Left cardiac atrium (tissue), 4 donors: ENCODE measurements at regions of chr12 and their contacts with region 1.

Region 1: DNA sequence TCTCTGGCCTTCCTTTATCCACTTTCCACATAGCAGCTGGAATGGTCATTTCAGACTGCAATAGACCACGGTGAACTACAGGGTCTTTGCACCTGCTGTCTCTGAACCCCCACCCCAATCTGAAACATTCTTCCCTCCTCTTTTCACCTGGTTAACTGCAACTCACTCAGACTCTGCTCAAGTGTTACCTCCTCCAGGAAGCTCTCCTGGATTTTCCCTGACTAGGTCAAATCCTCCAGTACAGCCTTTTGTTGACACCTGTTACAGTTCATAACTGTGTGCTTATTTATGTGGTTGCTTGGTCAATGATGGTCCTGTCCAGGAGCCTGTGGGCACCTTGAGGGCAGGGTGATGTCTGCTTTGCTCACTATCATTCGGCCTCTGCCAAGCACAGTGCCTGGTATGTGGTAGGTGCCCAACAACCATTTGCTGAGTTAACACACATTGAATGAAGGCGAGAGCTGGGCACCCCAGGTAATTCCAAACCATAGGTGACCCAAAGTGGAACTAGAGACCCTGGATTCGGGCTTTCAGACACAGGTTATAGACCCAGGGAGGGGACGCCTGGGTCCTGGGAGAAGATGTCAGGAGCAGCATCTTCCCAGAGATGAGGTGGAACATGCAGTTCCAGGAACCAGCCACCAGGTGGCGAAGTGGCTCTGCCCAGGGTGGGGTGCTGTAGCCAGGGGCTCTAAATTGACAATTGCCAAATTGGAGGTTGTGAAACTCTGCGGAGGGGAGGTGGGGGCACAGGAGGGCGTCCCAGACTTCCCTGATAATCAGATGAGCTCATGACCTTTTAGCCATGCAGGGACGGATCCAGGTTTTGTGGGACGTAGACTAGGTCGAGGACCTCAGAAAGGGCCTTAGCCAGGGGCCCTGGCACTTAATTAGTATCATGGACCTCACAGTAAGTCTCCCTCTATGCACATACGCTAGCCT is 28.1 kb downstream of the TRPV4 start:
- DNase-seq: peak; percentile 60
- ATAC-seq: peak; percentile 85 to 86

Region 2: DNA sequence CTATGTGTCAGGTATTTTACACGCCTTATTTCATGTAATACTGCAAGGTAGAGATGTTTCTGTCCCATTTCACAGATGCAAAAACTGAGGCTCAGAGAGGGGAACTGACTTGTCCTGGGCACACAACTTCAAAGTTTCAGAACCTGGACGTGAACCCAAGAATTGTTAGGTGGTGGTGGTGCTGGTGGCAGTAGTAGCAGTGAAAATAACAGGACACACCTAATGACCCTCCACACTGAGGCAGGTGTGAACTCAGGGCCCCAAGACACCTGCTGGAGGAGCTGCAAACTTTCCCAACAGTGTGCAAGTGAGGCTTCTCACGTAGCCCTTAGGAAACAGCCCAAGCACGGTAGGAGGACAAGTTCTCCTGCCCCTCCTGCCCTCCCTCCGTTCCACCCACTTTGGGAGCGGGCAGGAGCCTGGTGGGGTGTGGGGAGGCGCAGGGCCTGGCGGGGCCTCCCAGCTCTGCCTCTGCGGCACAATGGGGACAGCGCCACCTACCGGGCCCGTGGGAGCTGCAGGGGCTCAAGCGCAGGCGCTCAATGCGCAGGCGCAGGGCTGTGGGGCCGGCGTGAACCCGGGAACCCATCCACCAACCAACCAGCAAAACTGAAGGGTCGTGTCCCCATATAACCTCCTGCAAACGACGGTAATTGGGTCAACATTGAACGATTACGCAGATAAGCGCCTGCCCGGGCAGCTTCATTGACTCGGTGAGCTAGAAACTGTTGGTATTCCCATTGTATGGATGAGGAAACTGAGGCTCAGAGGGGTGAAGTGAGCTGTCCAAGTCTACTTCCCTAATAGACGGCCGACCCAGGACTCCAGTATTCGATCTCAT is 40.1 kb after region 1 on chr12:
- intact Hi-C with region 1: loop called in 1 of 2 experiments (anchors 2 kb)
- DNase-seq: peak; percentile 90
- ATAC-seq: peak; percentile 96

Region 3: DNA sequence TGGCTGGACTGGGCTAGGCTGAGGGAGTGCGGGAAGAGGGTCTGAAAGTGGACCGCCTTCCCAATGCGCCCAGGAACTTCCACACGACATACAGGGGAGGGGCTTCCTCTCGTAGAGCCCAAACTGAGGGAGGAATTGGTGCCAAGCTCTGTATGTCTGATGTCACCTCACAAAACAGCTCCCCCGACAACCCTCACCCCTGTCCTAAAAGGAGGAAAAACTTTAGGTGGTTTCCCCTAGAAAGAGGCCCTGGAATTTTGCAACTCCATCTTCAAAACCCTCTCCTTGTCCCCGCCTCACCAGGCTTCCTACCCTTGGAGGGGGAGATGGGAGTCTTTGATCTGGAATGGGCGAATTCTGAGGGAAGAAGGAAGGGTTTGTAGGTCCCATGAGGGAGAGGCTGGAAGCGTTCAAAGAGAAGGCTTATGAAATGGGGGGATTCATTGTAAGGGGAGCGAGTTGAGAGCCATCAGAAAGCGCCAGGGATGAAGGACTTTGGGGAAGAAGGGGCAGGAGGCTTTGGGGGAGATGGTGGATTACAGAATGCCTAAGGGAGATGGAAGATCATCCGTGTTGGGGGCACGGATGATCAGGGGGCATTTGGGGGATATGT is 74.4 kb after region 1 on chr12:
- intact Hi-C with region 1: loop called (anchors 2 to 10 kb)
- DNase-seq: no peak
- ATAC-seq: peak in 1 of 2 donors; percentile 8